ENCODE measurements at regions of chr2 and their contacts with region 1.

Region 1: DNA sequence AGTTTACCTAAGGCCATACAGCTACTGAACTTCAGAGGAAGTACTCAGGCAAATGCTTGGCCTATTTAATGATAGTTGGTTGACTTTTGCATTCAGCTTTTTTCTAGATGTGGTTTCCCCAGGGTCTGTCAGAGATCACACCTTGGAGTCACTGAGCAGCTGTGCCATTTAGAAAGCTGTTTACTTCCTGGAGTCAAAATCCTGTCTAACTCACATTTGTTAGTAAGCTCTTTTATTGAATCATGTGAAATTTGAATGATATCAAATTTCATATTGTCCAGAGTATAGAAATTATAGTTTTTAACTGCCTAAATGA is 7.6 kb upstream of the TRIB2 start:
- DNase-seq: peak; percentile 65 to 78 (median 72)
- H3K4me3 ChIP-seq: no peak overlapping the region
- H3K4me3 Mint-ChIP-seq: peak overlapping the region in 6 of 8 donors; percentile 20 to 79 (median 70)
- H3K27ac ChIP-seq: peak overlapping the region; percentile 44
- H3K27ac Mint-ChIP-seq: peak overlapping the region; percentile 87 to 98 (median 92)
- H3K4me1 ChIP-seq: peaks cover 76% of the 10 kb centered on the region
- H3K4me1 Mint-ChIP-seq: peaks cover 50 to 85% (median 72%) of the 10 kb centered on the region in 4 donors
- H3K27me3 ChIP-seq: no peaks in the 10 kb centered on the region
- H3K27me3 Mint-ChIP-seq: no peaks in the 10 kb centered on the region

Region 2: DNA sequence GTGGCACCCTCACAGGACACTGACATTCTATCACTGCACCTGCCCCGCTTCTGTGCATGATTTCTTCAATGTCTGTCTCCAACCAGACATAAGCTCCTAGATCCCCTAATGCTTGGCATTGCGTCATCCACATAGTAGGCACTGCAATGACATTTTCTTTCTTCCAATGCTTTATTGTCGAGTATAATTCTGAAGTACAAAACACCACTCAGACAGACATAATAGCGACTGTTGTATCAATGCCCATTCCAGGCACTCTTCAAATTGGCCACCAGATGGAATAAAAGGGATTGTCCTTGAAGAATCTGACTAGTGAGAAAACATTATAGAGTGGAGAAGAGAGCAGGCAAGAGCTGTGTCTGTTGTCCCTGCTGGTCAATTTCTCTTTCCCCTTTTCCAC is 873.8 kb before region 1 on chr2:
- CTCF ChIA-PET with region 1: no interaction called
- POLR2A ChIA-PET with region 1: no interaction called
- intact Hi-C with region 1: no loop called
- DNase-seq: no peak
- H3K4me3 ChIP-seq: no peak overlapping the region
- H3K4me3 Mint-ChIP-seq: no peak overlapping the region
- H3K27ac ChIP-seq: no peak overlapping the region
- H3K27ac Mint-ChIP-seq: peak overlapping the region in 1 of 7 donors; percentile 36
- H3K4me1 ChIP-seq: peaks cover 12% of the 10 kb centered on the region
- H3K4me1 Mint-ChIP-seq: peaks cover 6 to 22% (median 15%) of the 10 kb centered on the region in 4 donors
- H3K27me3 ChIP-seq: no peaks in the 10 kb centered on the region
- H3K27me3 Mint-ChIP-seq: peaks cover 1 to 3% of the 10 kb centered on the region in 2 donors

Region 3: GRCh38 chr2:12456293-12457151 is 252.6 kb before region 1 on chr2:
- CTCF ChIA-PET with region 1: no interaction called
- POLR2A ChIA-PET with region 1: interaction called, 4 read pairs
- intact Hi-C with region 1: loop called (anchors 1 kb)
- DNase-seq: peak; percentile 52 to 69 (median 58)
- H3K4me3 ChIP-seq: peak overlapping the region; percentile 15 to 49
- H3K4me3 Mint-ChIP-seq: peak overlapping the region; percentile 76 to 90 (median 82)
- H3K27ac ChIP-seq: peak overlapping the region; percentile 48
- H3K27ac Mint-ChIP-seq: peak overlapping the region; percentile 87 to 96 (median 94)
- H3K4me1 ChIP-seq: peaks cover 37% of the 10 kb centered on the region
- H3K4me1 Mint-ChIP-seq: peaks cover 29 to 46% (median 35%) of the 10 kb centered on the region in 4 donors
- H3K27me3 ChIP-seq: no peaks in the 10 kb centered on the region
- H3K27me3 Mint-ChIP-seq: no peaks in the 10 kb centered on the region

Region 4: DNA sequence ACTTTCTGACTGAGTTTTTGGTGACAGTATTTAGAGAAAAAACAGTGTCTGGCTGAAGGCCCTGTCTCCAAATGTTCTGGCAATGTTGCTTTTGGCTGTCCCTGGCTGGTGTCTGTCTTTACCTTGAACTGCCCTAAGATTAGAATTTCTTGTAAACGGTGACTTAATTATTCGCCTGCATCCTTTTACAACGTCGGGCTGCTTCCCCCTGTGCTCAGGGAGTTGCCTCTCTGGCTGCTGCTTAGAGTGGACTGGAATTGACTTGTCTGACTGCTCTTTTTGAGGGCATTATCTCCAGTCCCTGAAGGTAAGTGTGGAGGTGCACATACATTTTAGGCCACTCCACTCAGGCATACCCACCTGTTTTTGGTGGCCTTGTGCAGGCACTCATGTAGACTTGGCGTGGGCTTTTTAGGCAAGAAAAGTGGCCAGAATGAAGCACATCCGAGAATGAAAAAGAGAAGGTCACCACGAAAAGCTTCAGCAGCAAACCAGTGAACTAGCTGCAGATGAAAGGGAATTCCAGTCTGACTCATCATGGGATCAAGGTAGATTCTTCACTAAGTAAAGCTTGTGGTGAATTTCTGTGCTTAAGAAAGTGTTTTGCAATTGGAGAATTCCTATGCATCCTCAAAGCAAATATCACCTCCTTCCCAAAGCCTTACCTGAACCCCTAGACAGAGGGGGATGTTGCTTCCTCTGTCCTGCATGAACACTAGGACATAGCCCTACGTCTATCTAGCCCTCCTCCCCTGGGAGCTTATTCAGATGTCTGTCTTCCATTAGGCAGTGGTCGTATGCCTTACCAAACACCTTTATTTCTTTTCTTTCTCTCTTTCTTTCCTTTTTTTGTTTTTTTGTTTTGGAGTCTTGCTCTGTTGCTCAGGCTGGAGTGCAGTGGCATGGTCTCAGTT is 222.7 kb before region 1 on chr2:
- CTCF ChIA-PET with region 1: no interaction called
- POLR2A ChIA-PET with region 1: interaction called, 10 read pairs
- intact Hi-C with region 1: no loop called
- DNase-seq: no peak
- H3K4me3 ChIP-seq: no peak overlapping the region
- H3K4me3 Mint-ChIP-seq: peak overlapping the region in 7 of 8 donors; percentile 13 to 89 (median 81)
- H3K27ac ChIP-seq: no peak overlapping the region
- H3K27ac Mint-ChIP-seq: peak overlapping the region; percentile 79 to 95 (median 92)
- H3K4me1 ChIP-seq: peaks cover 77% of the 10 kb centered on the region
- H3K4me1 Mint-ChIP-seq: peaks cover 57 to 69% (median 67%) of the 10 kb centered on the region in 4 donors
- H3K27me3 ChIP-seq: no peaks in the 10 kb centered on the region
- H3K27me3 Mint-ChIP-seq: no peaks in the 10 kb centered on the region

Region 5: GRCh38 chr2:12728221-12728777 is 19.1 kb after region 1 on chr2:
- CTCF ChIA-PET with region 1: interaction called, 4 read pairs
- POLR2A ChIA-PET with region 1: interaction called, 14 read pairs
- intact Hi-C with region 1: no loop called
- DNase-seq: peak; percentile 76 to 86 (median 83)
- H3K4me3 ChIP-seq: peak overlapping the region; percentile 29 to 34
- H3K4me3 Mint-ChIP-seq: peak overlapping the region; percentile 65 to 86 (median 78)
- H3K27ac ChIP-seq: peak overlapping the region; percentile 47
- H3K27ac Mint-ChIP-seq: peak overlapping the region; percentile 87 to 96 (median 91)
- H3K4me1 ChIP-seq: peaks cover 100% of the 10 kb centered on the region
- H3K4me1 Mint-ChIP-seq: peaks cover 70 to 99% (median 92%) of the 10 kb centered on the region in 4 donors
- H3K27me3 ChIP-seq: no peaks in the 10 kb centered on the region
- H3K27me3 Mint-ChIP-seq: no peaks in the 10 kb centered on the region